ENCODE measurements at regions of chr11 and their contacts with region 1.

Region 1: GRCh38 chr11:110376711-110377324 is 52.9 kb upstream of the FDX1 start:
- DNase-seq: peak in 7 of 9 donors; percentile 13 to 45 (median 22)
- ATAC-seq: peak; percentile 68
- H3K4me3 ChIP-seq: no peak overlapping the region
- H3K4me3 Mint-ChIP-seq: no peak overlapping the region
- H3K27ac ChIP-seq: no peak overlapping the region
- H3K27ac Mint-ChIP-seq: no peak overlapping the region
- H3K4me1 ChIP-seq: no peaks in the 10 kb centered on the region
- H3K4me1 Mint-ChIP-seq: peaks cover 0 to 27% (median 5%) of the 10 kb centered on the region in 7 donors
- H3K27me3 ChIP-seq: no peaks in the 10 kb centered on the region
- H3K27me3 Mint-ChIP-seq: peaks cover 0 to 6% (median 4%) of the 10 kb centered on the region in 5 donors

Region 2: GRCh38 chr11:109946322-109946846 is 430.4 kb before region 1 on chr11:
- CTCF ChIA-PET with region 1: no interaction called
- POLR2A ChIA-PET with region 1: no interaction called
- intact Hi-C with region 1: loop called in 1 of 2 experiments (anchors 5 kb)
- DNase-seq: peak in 7 of 9 donors; percentile 7 to 51 (median 20)
- ATAC-seq: peak; percentile 97
- H3K4me3 ChIP-seq: no peak overlapping the region
- H3K4me3 Mint-ChIP-seq: peak overlapping the region in 7 of 10 donors; percentile 40 to 75 (median 66)
- H3K27ac ChIP-seq: no peak overlapping the region
- H3K27ac Mint-ChIP-seq: no peak overlapping the region
- H3K4me1 ChIP-seq: no peaks in the 10 kb centered on the region
- H3K4me1 Mint-ChIP-seq: peaks cover 0 to 10% (median 9%) of the 10 kb centered on the region in 7 donors
- H3K27me3 ChIP-seq: no peaks in the 10 kb centered on the region
- H3K27me3 Mint-ChIP-seq: peaks cover 0 to 22% (median 11%) of the 10 kb centered on the region in 5 donors

Region 3: DNA sequence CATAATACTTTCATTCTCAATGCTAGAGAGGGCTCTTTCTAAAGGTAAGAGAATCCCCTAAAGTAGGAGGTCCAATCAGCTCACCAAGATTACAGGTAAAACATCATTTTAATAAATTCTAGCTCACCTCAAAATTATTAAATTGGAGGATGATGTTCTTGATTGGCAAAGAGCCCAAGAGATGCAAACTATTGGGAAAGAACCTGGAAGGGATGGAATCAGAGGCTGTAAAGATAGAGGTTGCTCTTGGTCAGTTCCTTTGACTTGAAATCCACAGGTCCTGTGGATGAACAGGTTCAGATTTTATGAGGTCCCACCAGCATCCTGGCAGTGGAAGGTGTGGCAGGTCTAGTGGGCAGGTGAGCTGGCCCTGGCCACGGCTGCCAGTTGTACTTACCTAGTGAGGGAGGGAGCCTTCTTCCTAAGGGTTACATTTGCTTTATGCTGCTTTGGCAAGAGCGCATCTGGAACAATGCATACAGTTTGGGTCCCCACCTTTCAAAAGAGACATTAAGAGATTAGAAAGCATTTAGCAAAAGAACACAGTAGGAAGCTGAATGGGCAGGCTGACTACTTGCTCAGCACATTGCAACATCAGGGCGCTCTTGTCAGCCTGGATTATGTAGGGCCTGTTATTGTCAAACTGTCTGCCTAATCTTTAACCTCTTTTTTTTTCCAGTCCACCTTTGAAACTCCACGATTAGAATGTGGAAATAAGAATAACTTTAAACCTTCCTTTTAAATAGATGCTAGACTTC is 177.5 kb before region 1 on chr11:
- CTCF ChIA-PET with region 1: interaction called, 18 read pairs
- POLR2A ChIA-PET with region 1: no interaction called
- intact Hi-C with region 1: loop called (anchors 1 kb)
- DNase-seq: no peak
- ATAC-seq: no peak
- H3K4me3 ChIP-seq: no peak overlapping the region
- H3K4me3 Mint-ChIP-seq: no peak overlapping the region
- H3K27ac ChIP-seq: no peak overlapping the region
- H3K27ac Mint-ChIP-seq: no peak overlapping the region
- H3K4me1 ChIP-seq: no peaks in the 10 kb centered on the region
- H3K4me1 Mint-ChIP-seq: peaks cover 0 to 4% (median 0%) of the 10 kb centered on the region in 7 donors
- H3K27me3 ChIP-seq: no peaks in the 10 kb centered on the region
- H3K27me3 Mint-ChIP-seq: peaks cover 0 to 9% (median 2%) of the 10 kb centered on the region in 5 donors

Region 4: GRCh38 chr11:110327508-110327907 is 49.3 kb before region 1 on chr11:
- CTCF ChIA-PET with region 1: no interaction called
- POLR2A ChIA-PET with region 1: no interaction called
- intact Hi-C with region 1: loop called in 1 of 2 experiments (anchors 5 kb)
- DNase-seq: no peak
- ATAC-seq: no peak
- H3K4me3 ChIP-seq: no peak overlapping the region
- H3K4me3 Mint-ChIP-seq: peak overlapping the region in 8 of 10 donors; percentile 1 to 98 (median 22)
- H3K27ac ChIP-seq: no peak overlapping the region
- H3K27ac Mint-ChIP-seq: peak overlapping the region in 1 of 9 donors; percentile 98
- H3K4me1 ChIP-seq: peaks cover 0 to 11% of the 10 kb centered on the region in 2 donors
- H3K4me1 Mint-ChIP-seq: peaks cover 0 to 33% (median 12%) of the 10 kb centered on the region in 7 donors
- H3K27me3 ChIP-seq: no peaks in the 10 kb centered on the region
- H3K27me3 Mint-ChIP-seq: peaks cover 0 to 18% (median 4%) of the 10 kb centered on the region in 5 donors

Region 5: GRCh38 chr11:110349138-110349996 is 27.5 kb before region 1 on chr11:
- CTCF ChIA-PET with region 1: interaction called, 3 read pairs
- POLR2A ChIA-PET with region 1: no interaction called
- intact Hi-C with region 1: loop called in 1 of 2 experiments (anchors 1 kb)
- DNase-seq: peak in 1 of 9 donors; percentile 79
- ATAC-seq: peak; percentile 18
- H3K4me3 ChIP-seq: no peak overlapping the region
- H3K4me3 Mint-ChIP-seq: peak overlapping the region in 5 of 10 donors; percentile 3 to 69 (median 7)
- H3K27ac ChIP-seq: no peak overlapping the region
- H3K27ac Mint-ChIP-seq: peak overlapping the region in 6 of 9 donors; percentile 6 to 96 (median 38)
- H3K4me1 ChIP-seq: peaks cover 0 to 7% of the 10 kb centered on the region in 2 donors
- H3K4me1 Mint-ChIP-seq: peaks cover 13 to 49% (median 20%) of the 10 kb centered on the region in 7 donors
- H3K27me3 ChIP-seq: no peaks in the 10 kb centered on the region
- H3K27me3 Mint-ChIP-seq: no peaks in the 10 kb centered on the region